ENCODE measurements at regions of chr7 and their contacts with region 1.

Region 1: GRCh38 chr7:37342688-37343471 is 105.8 kb downstream of the ELMO1 start:
- DNase-seq: peak; percentile 44 to 82 (median 73)
- ATAC-seq: peak; percentile 93
- H3K4me3 ChIP-seq: peak overlapping the region; percentile 55
- H3K4me3 Mint-ChIP-seq: peak overlapping the region; percentile 78 to 98 (median 88)
- H3K27ac ChIP-seq: peak overlapping the region; percentile 69
- H3K27ac Mint-ChIP-seq: peak overlapping the region; percentile 92 to 99 (median 95)
- H3K4me1 ChIP-seq: peaks cover 17 to 51% of the 10 kb centered on the region in 2 donors
- H3K4me1 Mint-ChIP-seq: peaks cover 33 to 93% (median 75%) of the 10 kb centered on the region in 7 donors
- H3K27me3 ChIP-seq: no peaks in the 10 kb centered on the region
- H3K27me3 Mint-ChIP-seq: no peaks in the 10 kb centered on the region

Region 2: DNA sequence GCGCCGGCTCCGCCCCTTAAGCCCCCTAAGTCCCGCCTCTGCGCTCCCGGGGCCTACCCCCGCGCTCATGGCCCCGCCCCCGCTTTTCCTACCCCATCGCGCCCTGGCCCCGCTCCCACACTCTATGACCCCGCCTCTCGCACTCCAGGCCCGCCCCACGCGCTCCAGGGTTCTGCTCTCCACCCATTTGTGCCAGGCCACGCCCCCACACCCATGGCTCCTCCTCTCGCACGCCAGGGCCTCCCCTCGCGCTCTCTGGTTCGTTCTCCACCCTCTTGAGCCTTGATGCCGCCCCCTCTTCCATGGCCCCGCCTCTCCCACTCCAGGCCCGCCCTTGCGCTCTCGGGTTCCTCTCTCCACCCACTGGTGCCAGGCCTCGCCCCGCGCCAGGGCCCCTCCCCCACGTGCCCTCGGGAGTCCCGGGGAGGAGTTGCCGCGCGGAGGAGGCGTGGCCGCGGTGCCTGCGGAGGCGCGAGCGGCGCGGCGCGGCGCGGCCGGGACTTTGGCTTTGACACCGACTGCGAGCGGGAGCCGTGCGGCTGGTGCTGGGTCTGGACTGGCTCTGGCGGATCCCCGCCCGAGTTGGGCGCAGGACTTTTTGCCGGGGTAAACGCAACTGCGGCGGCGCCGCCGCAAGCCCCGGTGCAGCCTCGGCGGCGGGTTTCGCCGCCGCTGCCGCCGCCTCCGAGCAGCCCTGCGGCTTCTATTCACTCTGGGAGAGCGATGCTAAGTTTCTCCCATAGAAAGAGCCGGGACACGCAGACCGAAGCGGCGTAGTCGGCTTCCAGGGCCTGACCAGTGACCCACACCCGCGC is 1189.9 kb before region 1 on chr7 and contains the start of gene EEPD1:
- CTCF ChIA-PET with region 1: no interaction called
- POLR2A ChIA-PET with region 1: no interaction called
- intact Hi-C with region 1: loop called in 1 of 2 experiments (anchors 5 kb)
- DNase-seq: peak; percentile 99 to 100 (median 100)
- ATAC-seq: peak; percentile 96
- H3K4me3 ChIP-seq: peak within 1 kb of the TSS; percentile 72
- H3K4me3 Mint-ChIP-seq: peak within 1 kb of the TSS; percentile 70 to 93 (median 84)
- H3K27ac ChIP-seq: peak within 1 kb of the TSS; percentile 73
- H3K27ac Mint-ChIP-seq: peak within 1 kb of the TSS in 8 of 9 donors; percentile 10 to 87 (median 74)
- H3K4me1 ChIP-seq: peaks cover 7 to 16% of the 10 kb centered on the region in 2 donors
- H3K4me1 Mint-ChIP-seq: peaks cover 12 to 31% (median 24%) of the 10 kb centered on the region in 7 donors
- H3K27me3 ChIP-seq: no peaks in the 10 kb centered on the region
- H3K27me3 Mint-ChIP-seq: peaks cover 0 to 21% (median 0%) of the 10 kb centered on the region in 5 donors
- total RNA-seq, gene EEPD1: 2.2 to 13.2 (median 3.7) TPM

Region 3: GRCh38 chr7:36389371-36390198 is 953.3 kb before region 1 on chr7 and contains the start of gene ANLN:
- CTCF ChIA-PET with region 1: no interaction called
- POLR2A ChIA-PET with region 1: no interaction called
- intact Hi-C with region 1: loop called in 1 of 2 experiments (anchors 5 kb)
- DNase-seq: peak; percentile 71 to 91 (median 82)
- ATAC-seq: peak; percentile 98
- H3K4me3 ChIP-seq: peak within 1 kb of the TSS; percentile 78
- H3K4me3 Mint-ChIP-seq: peak within 1 kb of the TSS; percentile 77 to 90 (median 85)
- H3K27ac ChIP-seq: peak within 1 kb of the TSS; percentile 67
- H3K27ac Mint-ChIP-seq: peak within 1 kb of the TSS; percentile 72 to 90 (median 81)
- H3K4me1 ChIP-seq: peaks cover 8 to 19% of the 10 kb centered on the region in 2 donors
- H3K4me1 Mint-ChIP-seq: peaks cover 12 to 39% (median 26%) of the 10 kb centered on the region in 7 donors
- H3K27me3 ChIP-seq: no peaks in the 10 kb centered on the region
- H3K27me3 Mint-ChIP-seq: peaks cover 0 to 12% (median 0%) of the 10 kb centered on the region in 5 donors
- total RNA-seq, gene ANLN: 0.35 to 48.6 (median 0.82) TPM

Region 4: DNA sequence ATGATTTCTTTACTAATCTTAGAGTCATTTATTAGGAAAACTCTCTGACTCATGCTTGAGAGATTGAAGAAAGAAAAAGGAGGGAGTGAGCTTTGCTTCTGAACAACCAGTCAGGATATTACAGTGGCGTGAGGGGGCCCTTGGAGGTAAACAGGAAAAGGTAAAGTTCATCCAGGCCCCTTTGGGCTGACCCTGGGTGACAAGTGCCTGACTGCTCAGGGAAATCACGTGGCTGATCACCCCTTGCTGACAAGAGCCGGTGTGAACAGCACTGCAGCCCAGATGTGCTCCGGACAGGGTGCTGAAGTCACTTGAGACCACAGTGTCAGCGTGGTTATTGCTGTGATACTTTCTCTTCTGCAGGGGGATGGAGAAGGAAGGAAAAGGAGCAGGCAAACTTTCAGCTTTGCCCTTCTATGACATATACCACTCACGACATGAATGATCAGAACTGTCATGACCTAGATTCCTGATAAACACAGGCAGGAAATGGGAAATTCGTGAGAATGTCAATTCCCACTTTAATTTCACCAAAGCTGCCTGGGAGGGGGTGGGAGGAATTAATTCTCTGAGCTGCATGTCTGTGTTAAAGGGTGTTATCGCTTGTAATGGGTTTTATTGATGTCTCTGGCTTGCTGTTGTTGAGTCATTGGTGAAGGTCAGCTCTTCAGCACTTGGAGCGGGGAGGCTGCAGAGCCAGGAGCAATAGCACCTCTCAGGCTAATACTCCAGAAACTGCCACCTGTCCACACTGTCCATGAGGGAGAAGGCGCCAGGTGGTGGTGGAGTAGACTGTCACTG is 478.8 kb before region 1 on chr7:
- CTCF ChIA-PET with region 1: no interaction called
- POLR2A ChIA-PET with region 1: no interaction called
- intact Hi-C with region 1: no loop called
- DNase-seq: no peak
- ATAC-seq: peak; percentile 78
- H3K4me3 ChIP-seq: no peak overlapping the region
- H3K4me3 Mint-ChIP-seq: peak overlapping the region in 1 of 10 donors; percentile 33
- H3K27ac ChIP-seq: no peak overlapping the region
- H3K27ac Mint-ChIP-seq: peak overlapping the region; percentile 3 to 78 (median 51)
- H3K4me1 ChIP-seq: peaks cover 0 to 29% of the 10 kb centered on the region in 2 donors
- H3K4me1 Mint-ChIP-seq: peaks cover 0 to 50% (median 5%) of the 10 kb centered on the region in 7 donors
- H3K27me3 ChIP-seq: no peaks in the 10 kb centered on the region
- H3K27me3 Mint-ChIP-seq: no peaks in the 10 kb centered on the region

Region 5: GRCh38 chr7:37208528-37208927 is 134.4 kb before region 1 on chr7:
- CTCF ChIA-PET with region 1: no interaction called
- POLR2A ChIA-PET with region 1: no interaction called
- intact Hi-C with region 1: loop called (anchors 1 to 2 kb)
- DNase-seq: peak in 7 of 9 donors; percentile 17 to 56 (median 33)
- ATAC-seq: peak; percentile 77
- H3K4me3 ChIP-seq: no peak overlapping the region
- H3K4me3 Mint-ChIP-seq: no peak overlapping the region
- H3K27ac ChIP-seq: no peak overlapping the region
- H3K27ac Mint-ChIP-seq: peak overlapping the region; percentile 25 to 89 (median 71)
- H3K4me1 ChIP-seq: no peaks in the 10 kb centered on the region
- H3K4me1 Mint-ChIP-seq: peaks cover 0 to 17% (median 8%) of the 10 kb centered on the region in 7 donors
- H3K27me3 ChIP-seq: no peaks in the 10 kb centered on the region
- H3K27me3 Mint-ChIP-seq: no peaks in the 10 kb centered on the region

Region 6: DNA sequence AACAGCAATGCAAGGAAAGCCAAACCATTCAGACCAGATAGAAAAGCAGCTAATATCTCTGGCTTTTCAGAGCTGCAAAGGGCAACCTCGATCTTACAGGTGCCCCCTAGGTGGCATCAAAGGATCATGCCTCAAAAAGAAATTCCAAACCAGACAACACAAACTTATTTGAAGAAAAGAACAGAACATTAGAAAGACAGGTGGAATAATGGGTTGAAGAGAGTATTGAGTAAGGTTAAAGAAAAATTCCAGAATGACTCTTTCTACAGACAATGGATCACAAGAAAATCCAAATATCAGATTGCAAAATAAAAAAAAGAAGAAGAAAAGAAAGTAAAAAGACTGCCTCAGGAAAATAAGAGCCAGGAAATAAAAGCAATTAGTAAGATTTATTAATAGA is 108.0 kb before region 1 on chr7:
- CTCF ChIA-PET with region 1: interaction called, 4 read pairs
- POLR2A ChIA-PET with region 1: interaction called, 3 read pairs
- intact Hi-C with region 1: loop called in 1 of 2 experiments (anchors 2 kb)
- DNase-seq: peak in 6 of 9 donors; percentile 13 to 45 (median 33)
- ATAC-seq: peak; percentile 32
- H3K4me3 ChIP-seq: no peak overlapping the region
- H3K4me3 Mint-ChIP-seq: no peak overlapping the region
- H3K27ac ChIP-seq: no peak overlapping the region
- H3K27ac Mint-ChIP-seq: peak overlapping the region in 2 of 9 donors; percentile 1 to 10
- H3K4me1 ChIP-seq: no peaks in the 10 kb centered on the region
- H3K4me1 Mint-ChIP-seq: peaks cover 12 to 33% (median 24%) of the 10 kb centered on the region in 7 donors
- H3K27me3 ChIP-seq: no peaks in the 10 kb centered on the region
- H3K27me3 Mint-ChIP-seq: no peaks in the 10 kb centered on the region

Region 7: GRCh38 chr7:37284805-37285231 is 58.1 kb before region 1 on chr7:
- CTCF ChIA-PET with region 1: interaction called, 7 read pairs
- POLR2A ChIA-PET with region 1: interaction called, 5 read pairs
- intact Hi-C with region 1: loop called (anchors 1 to 2 kb)
- DNase-seq: peak in 7 of 9 donors; percentile 15 to 38 (median 24)
- ATAC-seq: peak; percentile 59
- H3K4me3 ChIP-seq: no peak overlapping the region
- H3K4me3 Mint-ChIP-seq: no peak overlapping the region
- H3K27ac ChIP-seq: no peak overlapping the region
- H3K27ac Mint-ChIP-seq: peak overlapping the region in 5 of 9 donors; percentile 8 to 76 (median 26)
- H3K4me1 ChIP-seq: peaks cover 8 to 18% of the 10 kb centered on the region in 2 donors
- H3K4me1 Mint-ChIP-seq: peaks cover 38 to 80% (median 61%) of the 10 kb centered on the region in 7 donors
- H3K27me3 ChIP-seq: no peaks in the 10 kb centered on the region
- H3K27me3 Mint-ChIP-seq: no peaks in the 10 kb centered on the region

Region 8: GRCh38 chr7:37311355-37311754 is 31.5 kb before region 1 on chr7:
- CTCF ChIA-PET with region 1: no interaction called
- POLR2A ChIA-PET with region 1: no interaction called
- intact Hi-C with region 1: loop called (anchors 1 kb)
- DNase-seq: peak in 5 of 9 donors; percentile 27 to 36 (median 34)
- ATAC-seq: peak; percentile 61
- H3K4me3 ChIP-seq: no peak overlapping the region
- H3K4me3 Mint-ChIP-seq: peak overlapping the region in 7 of 10 donors; percentile 52 to 88 (median 66)
- H3K27ac ChIP-seq: peak overlapping the region; percentile 38
- H3K27ac Mint-ChIP-seq: peak overlapping the region in 7 of 9 donors; percentile 79 to 98 (median 97)
- H3K4me1 ChIP-seq: peaks cover 26 to 52% of the 10 kb centered on the region in 2 donors
- H3K4me1 Mint-ChIP-seq: peaks cover 50 to 85% (median 68%) of the 10 kb centered on the region in 7 donors
- H3K27me3 ChIP-seq: no peaks in the 10 kb centered on the region
- H3K27me3 Mint-ChIP-seq: no peaks in the 10 kb centered on the region